Calu3 (cell line): ENCODE measurements at regions of chr5 and their contacts with region 1.

Region 1: GRCh38 chr5:147530530-147531389 is 20.9 kb upstream of the DPYSL3 start:
- DNase-seq: no peak
- H3K4me3 Mint-ChIP-seq: no peak overlapping the region
- H3K27ac Mint-ChIP-seq: no peak overlapping the region
- H3K4me1 Mint-ChIP-seq: peaks cover 9% of the 10 kb centered on the region
- H3K27me3 Mint-ChIP-seq: no peaks in the 10 kb centered on the region
- CTCF ChIP-seq: no peak

Region 2: DNA sequence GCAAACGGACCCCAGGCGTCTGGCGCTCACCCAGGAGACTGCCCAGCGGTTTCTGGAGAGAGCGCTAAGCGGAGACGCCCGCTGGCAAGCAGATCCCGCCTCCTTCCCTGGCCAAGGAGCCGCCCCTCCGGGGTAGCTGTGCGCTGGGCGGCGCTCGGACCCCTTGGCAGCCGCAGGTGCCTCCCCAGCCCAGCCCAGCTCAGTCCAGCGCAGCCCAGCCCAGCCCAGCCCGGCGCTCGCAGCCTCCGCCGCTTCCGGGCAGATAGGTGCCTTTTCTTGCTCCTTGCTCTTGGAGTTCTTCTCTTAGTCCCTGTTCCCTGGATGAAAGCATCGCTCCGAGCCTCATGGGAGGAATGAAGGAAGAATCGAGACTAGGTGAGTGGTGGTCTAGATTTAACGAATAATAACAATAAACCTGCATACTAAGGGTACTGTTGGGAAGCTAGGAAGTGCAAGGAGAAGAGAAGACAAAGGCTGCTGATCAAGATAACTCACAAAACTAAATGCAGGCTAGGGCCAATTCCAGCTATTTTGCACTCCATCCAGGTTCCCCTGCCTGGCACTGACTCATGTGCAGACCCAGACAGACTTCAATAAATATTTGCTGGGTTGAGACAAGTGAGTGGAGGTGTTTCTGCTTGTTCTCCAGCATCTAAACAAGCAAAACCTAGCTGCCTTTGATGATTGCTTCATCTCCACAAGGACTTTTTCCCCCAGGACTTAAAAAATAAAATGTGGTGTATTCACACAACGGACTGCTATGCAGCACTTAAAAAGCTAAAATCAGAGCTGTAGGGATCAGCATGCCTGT is 295.7 kb before region 1 on chr5 and contains the start of gene STK32A:
- CTCF ChIA-PET with region 1: no interaction called
- intact Hi-C with region 1: no loop called
- DNase-seq: peak; percentile 93
- H3K4me3 Mint-ChIP-seq: peak within 1 kb of the TSS; percentile 89
- H3K27ac Mint-ChIP-seq: peak within 1 kb of the TSS; percentile 72
- H3K4me1 Mint-ChIP-seq: peaks cover 28% of the 10 kb centered on the region
- H3K27me3 Mint-ChIP-seq: no peaks in the 10 kb centered on the region
- CTCF ChIP-seq: no peak
- total RNA-seq, gene STK32A: 29.5 and 32.5 TPM in 2 replicates

Region 3: GRCh38 chr5:147517383-147517782 is 13.4 kb before region 1 on chr5:
- CTCF ChIA-PET with region 1: no interaction called
- intact Hi-C with region 1: loop called (anchors 2 kb)
- DNase-seq: no peak
- H3K4me3 Mint-ChIP-seq: no peak overlapping the region
- H3K27ac Mint-ChIP-seq: no peak overlapping the region
- H3K4me1 Mint-ChIP-seq: no peaks in the 10 kb centered on the region
- H3K27me3 Mint-ChIP-seq: peaks cover 14% of the 10 kb centered on the region
- CTCF ChIP-seq: no peak